ENCODE measurements at regions of chr1 and their contacts with region 1.

Region 1: DNA sequence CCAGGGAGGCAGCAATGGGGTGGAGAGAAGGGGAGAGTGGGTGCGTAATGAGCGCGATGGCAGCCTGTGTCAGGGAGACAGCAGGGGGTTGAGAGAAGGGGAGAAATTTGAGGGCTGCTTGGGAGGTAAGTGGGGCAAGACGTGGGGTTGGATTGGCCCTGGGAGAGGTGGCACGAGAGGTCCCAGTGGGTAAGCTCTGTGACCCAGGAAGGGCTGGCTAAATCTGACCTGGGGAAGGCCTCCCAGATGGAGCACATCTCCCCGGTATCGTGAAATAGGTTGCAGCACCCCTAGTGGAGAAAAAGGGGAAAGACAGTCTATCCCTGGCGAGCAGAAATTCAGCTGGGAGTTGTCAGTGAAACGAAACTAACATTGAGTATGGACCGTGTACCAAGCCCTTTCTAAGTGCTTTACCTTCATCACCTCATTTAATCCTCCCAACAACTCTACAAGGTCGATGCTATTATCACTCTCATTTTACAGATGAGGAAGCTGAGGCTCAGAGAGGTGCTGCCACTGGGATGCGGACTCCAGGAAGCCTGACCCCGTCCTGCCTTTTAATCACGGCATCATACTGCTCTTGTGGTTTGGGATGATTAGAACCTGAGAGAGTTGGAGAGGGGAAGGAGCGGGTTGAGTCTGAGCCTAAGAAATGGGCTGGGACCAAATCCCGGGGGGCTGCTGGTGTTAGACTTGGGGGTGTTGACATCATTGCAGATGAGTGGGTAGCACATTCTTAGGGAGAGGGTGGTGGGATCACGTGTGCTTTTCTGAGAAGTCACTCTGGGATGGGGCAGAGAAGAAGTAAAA is 56.6 kb upstream of the RPL11 start:
- DNase-seq: peak; percentile 84
- ATAC-seq: peak; percentile 87
- H3K4me3 ChIP-seq: peak overlapping the region in 4 of 5 experiments; percentile 18 to 66 (median 46)
- H3K4me3 Mint-ChIP-seq: peak overlapping the region; percentile 78
- H3K27ac ChIP-seq: peak overlapping the region; percentile 43 to 74
- H3K27ac Mint-ChIP-seq: peak overlapping the region; percentile 94
- H3K4me1 ChIP-seq: peaks cover 29 to 50% of the 10 kb centered on the region in 2 donors
- H3K4me1 Mint-ChIP-seq: peaks cover 51% of the 10 kb centered on the region
- H3K27me3 ChIP-seq: no peaks in the 10 kb centered on the region
- H3K27me3 Mint-ChIP-seq: no peaks in the 10 kb centered on the region
- CTCF ChIP-seq: peak; percentile 86

Region 2: DNA sequence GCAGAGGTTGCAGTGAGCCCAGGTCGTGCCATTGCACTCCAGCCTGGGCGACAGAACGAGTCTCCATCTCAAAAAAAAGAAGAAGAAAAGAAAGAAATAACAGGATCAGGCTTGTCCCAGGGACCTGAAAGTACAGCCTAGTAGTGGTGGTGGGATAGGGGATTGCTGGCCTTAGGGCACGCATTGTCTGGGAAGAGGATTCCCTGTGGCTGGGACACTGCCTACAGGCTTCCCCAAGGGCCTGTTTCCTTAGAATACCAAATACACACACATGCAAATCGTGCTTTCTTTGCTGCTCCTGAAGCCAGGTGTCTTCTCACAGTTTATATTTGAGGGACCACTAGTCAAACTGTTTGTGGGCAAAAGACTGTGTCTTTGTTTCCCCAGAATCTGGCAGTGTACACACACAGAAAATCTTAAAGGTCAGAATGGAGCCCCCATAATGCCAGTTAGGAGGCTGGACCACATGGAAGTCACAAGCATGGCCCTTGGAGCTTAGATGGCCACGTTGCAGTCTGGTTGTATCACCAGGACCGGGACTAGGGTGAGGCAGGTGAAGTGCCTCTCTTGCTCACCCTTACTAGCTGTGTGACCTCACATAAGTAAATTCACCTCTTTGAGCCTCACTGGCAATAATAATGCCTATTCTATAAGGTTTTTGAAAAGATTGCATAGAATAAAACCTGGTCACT is 138.4 kb before region 1 on chr1:
- CTCF ChIA-PET with region 1: interaction called, 124 read pairs
- POLR2A ChIA-PET with region 1: interaction called, 4 read pairs
- intact Hi-C with region 1: loop called (anchors 1 kb)
- DNase-seq: no peak
- ATAC-seq: no peak
- H3K4me3 ChIP-seq: no peak overlapping the region
- H3K4me3 Mint-ChIP-seq: no peak overlapping the region
- H3K27ac ChIP-seq: no peak overlapping the region
- H3K27ac Mint-ChIP-seq: no peak overlapping the region
- H3K4me1 ChIP-seq: peaks cover 3 to 13% of the 10 kb centered on the region in 2 donors
- H3K4me1 Mint-ChIP-seq: peaks cover 17% of the 10 kb centered on the region
- H3K27me3 ChIP-seq: peaks cover 0 to 3% (median 0%) of the 10 kb centered on the region in 4 experiments
- H3K27me3 Mint-ChIP-seq: peaks cover 1% of the 10 kb centered on the region
- CTCF ChIP-seq: no peak

Region 3: GRCh38 chr1:23567996-23568607 is 66.9 kb before region 1 on chr1:
- CTCF ChIA-PET with region 1: interaction called, 1,420 read pairs
- POLR2A ChIA-PET with region 1: interaction called, 11 read pairs
- intact Hi-C with region 1: no loop called
- DNase-seq: no peak
- ATAC-seq: peak; percentile 28
- H3K4me3 ChIP-seq: peak overlapping the region; percentile 30 to 88 (median 69)
- H3K4me3 Mint-ChIP-seq: peak overlapping the region; percentile 93
- H3K27ac ChIP-seq: peak overlapping the region; percentile 49 to 69
- H3K27ac Mint-ChIP-seq: peak overlapping the region; percentile 95
- H3K4me1 ChIP-seq: peaks cover 37 to 40% of the 10 kb centered on the region in 2 donors
- H3K4me1 Mint-ChIP-seq: peaks cover 54% of the 10 kb centered on the region
- H3K27me3 ChIP-seq: no peaks in the 10 kb centered on the region
- H3K27me3 Mint-ChIP-seq: no peaks in the 10 kb centered on the region
- CTCF ChIP-seq: no peak

Region 4: GRCh38 chr1:23613191-23614031 is 21.6 kb before region 1 on chr1:
- CTCF ChIA-PET with region 1: interaction called, 160 read pairs
- POLR2A ChIA-PET with region 1: interaction called, 23 read pairs
- intact Hi-C with region 1: loop called (anchors 2 kb)
- DNase-seq: peak; percentile 62
- ATAC-seq: peak; percentile 52
- H3K4me3 ChIP-seq: no peak overlapping the region
- H3K4me3 Mint-ChIP-seq: peak overlapping the region; percentile 75
- H3K27ac ChIP-seq: peak overlapping the region; percentile 76 to 88
- H3K27ac Mint-ChIP-seq: peak overlapping the region; percentile 86
- H3K4me1 ChIP-seq: peaks cover 62 to 76% of the 10 kb centered on the region in 2 donors
- H3K4me1 Mint-ChIP-seq: peaks cover 79% of the 10 kb centered on the region
- H3K27me3 ChIP-seq: no peaks in the 10 kb centered on the region
- H3K27me3 Mint-ChIP-seq: no peaks in the 10 kb centered on the region
- CTCF ChIP-seq: no peak

Region 5: GRCh38 chr1:23691499-23692307 is 56.7 kb after region 1 on chr1 and contains the start of gene RPL11:
- CTCF ChIA-PET with region 1: interaction called, 12 read pairs
- POLR2A ChIA-PET with region 1: no interaction called
- intact Hi-C with region 1: no loop called
- DNase-seq: peak; percentile 92
- ATAC-seq: peak; percentile 100
- H3K4me3 ChIP-seq: peak within 1 kb of the TSS; percentile 76 to 99 (median 77)
- H3K4me3 Mint-ChIP-seq: peak within 1 kb of the TSS; percentile 97
- H3K27ac ChIP-seq: peak within 1 kb of the TSS; percentile 79 to 84
- H3K27ac Mint-ChIP-seq: peak within 1 kb of the TSS; percentile 94
- H3K4me1 ChIP-seq: peaks cover 16 to 22% of the 10 kb centered on the region in 2 donors
- H3K4me1 Mint-ChIP-seq: peaks cover 48% of the 10 kb centered on the region
- H3K27me3 ChIP-seq: no peaks in the 10 kb centered on the region
- H3K27me3 Mint-ChIP-seq: no peaks in the 10 kb centered on the region
- CTCF ChIP-seq: peak; percentile 79
- total RNA-seq, gene RPL11: 1,439 and 1,539 TPM in 2 replicates